ENCODE measurements at regions of chr1 and their contacts with region 1.

Region 1: GRCh38 chr1:77986810-77987209 is 7.9 kb upstream of the FUBP1 start:
- DNase-seq: no peak
- ATAC-seq: no peak
- H3K4me3 ChIP-seq: no peak overlapping the region
- H3K27ac ChIP-seq: peak overlapping the region in 2 of 4 donors; percentile 98 to 99
- H3K4me1 ChIP-seq: peaks cover 4 to 41% (median 30%) of the 10 kb centered on the region in 3 donors
- H3K27me3 ChIP-seq: no peaks in the 10 kb centered on the region
- CTCF ChIP-seq: no peak

Region 2: GRCh38 chr1:78045926-78046778 is 59.3 kb after region 1 on chr1 and contains the start of gene GIPC2:
- intact Hi-C with region 1: loop called in 1 of 3 experiments (anchors 10 kb)
- DNase-seq: peak; percentile 49 to 82 (median 58)
- ATAC-seq: peak; percentile 49 to 69 (median 60)
- H3K4me3 ChIP-seq: peak within 1 kb of the TSS; percentile 40 to 83 (median 74)
- H3K27ac ChIP-seq: peak within 1 kb of the TSS; percentile 93 to 98 (median 96)
- H3K4me1 ChIP-seq: peaks cover 0 to 14% (median 10%) of the 10 kb centered on the region in 3 donors
- H3K27me3 ChIP-seq: no peaks in the 10 kb centered on the region
- CTCF ChIP-seq: no peak
- total RNA-seq, gene GIPC2: 10.8 to 22.1 (median 14.4) TPM